ENCODE measurements at regions of chr10 and their contacts with region 1.

Region 1: DNA sequence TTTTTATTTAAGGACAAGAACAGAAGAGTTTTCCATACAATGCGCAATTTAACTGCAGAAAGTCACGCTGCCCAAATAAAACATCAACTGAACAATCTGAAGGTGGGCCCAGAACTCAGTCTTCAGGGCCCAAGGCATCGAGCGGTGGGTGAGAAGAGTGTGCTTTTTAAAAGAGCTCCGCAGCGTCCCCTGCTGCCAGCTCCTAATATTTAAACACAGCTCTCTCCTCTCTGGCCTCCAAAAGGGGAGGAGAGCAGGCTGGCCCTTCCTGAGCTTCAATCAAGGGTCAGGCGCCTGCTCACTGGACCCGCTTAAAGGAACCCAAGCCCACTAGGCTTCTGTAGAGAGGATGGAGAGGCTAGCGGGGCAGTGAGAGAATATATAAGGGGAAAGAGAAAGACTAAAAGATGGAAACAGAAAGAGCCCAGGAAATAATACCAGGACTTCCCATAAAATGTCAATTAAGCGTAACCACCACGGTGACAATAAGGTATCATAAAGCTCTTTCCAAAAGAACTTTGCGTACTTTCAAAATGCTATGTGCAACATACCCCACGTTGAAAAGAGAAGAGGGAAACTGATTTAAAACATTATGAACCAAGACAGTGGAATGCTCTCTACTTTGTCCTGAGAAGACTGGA is 2.8 kb downstream of the FAM53B start:
- DNase-seq: peak; percentile 69 to 82 (median 71)
- H3K4me3 ChIP-seq: peak overlapping the region; percentile 74
- H3K4me3 Mint-ChIP-seq: peak overlapping the region; percentile 95 to 100 (median 98)
- H3K27ac ChIP-seq: peak overlapping the region; percentile 53
- H3K27ac Mint-ChIP-seq: peak overlapping the region; percentile 89 to 98 (median 96)
- H3K4me1 ChIP-seq: peaks cover 72% of the 10 kb centered on the region
- H3K4me1 Mint-ChIP-seq: peaks cover 70 to 77% (median 77%) of the 10 kb centered on the region in 3 donors
- H3K27me3 ChIP-seq: no peaks in the 10 kb centered on the region
- H3K27me3 Mint-ChIP-seq: peaks cover 0 to 1% of the 10 kb centered on the region in 2 donors

Region 2: GRCh38 chr10:124539935-124540641 is 201.3 kb before region 1 on chr10:
- CTCF ChIA-PET with region 1: interaction called, 154 read pairs
- POLR2A ChIA-PET with region 1: interaction called, 6 read pairs
- DNase-seq: peak; percentile 59 to 81 (median 63)
- H3K4me3 ChIP-seq: no peak overlapping the region
- H3K4me3 Mint-ChIP-seq: no peak overlapping the region
- H3K27ac ChIP-seq: no peak overlapping the region
- H3K27ac Mint-ChIP-seq: peak overlapping the region in 2 of 8 donors; percentile 3 to 57
- H3K4me1 ChIP-seq: peaks cover 11% of the 10 kb centered on the region
- H3K4me1 Mint-ChIP-seq: peaks cover under 1 to 13% (median 6%) of the 10 kb centered on the region in 3 donors
- H3K27me3 ChIP-seq: no peaks in the 10 kb centered on the region
- H3K27me3 Mint-ChIP-seq: no peaks in the 10 kb centered on the region

Region 3: DNA sequence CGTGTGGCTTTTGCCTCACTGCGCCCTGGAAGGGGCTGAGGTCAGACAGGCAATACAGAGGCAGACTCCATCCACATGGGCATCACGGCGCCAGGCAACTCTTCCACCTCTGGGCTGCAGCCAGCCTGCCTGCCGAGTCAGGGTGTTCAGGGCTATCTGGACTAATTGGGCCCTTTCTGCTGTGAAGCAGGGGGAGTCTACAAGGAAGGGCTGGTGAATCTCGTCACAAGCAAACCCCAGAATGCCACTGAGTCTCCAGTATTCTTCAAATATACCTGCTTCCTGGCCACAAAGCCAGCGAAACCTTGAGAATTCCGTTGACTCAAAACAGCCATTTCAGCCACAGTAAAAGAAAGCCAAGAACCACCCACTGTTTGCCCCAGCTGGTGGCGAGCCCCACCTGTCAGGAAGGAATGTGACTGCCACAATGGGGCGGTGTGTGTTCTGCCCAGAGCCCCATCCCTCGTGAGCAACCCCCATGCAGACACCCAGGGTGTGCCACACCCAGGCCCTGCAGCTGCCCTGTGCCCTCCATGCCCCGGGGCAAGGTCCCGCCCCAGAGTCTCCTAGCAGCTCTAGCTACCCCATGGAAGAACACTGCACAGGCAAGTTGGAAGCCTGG is 114.5 kb before region 1 on chr10:
- CTCF ChIA-PET with region 1: interaction called, 27 read pairs
- POLR2A ChIA-PET with region 1: interaction called, 4 read pairs
- DNase-seq: peak in 4 of 5 donors; percentile 14 to 68 (median 39)
- H3K4me3 ChIP-seq: peak overlapping the region; percentile 37
- H3K4me3 Mint-ChIP-seq: peak overlapping the region in 6 of 7 donors; percentile 43 to 73 (median 67)
- H3K27ac ChIP-seq: no peak overlapping the region
- H3K27ac Mint-ChIP-seq: peak overlapping the region; percentile 78 to 95 (median 90)
- H3K4me1 ChIP-seq: peaks cover 53% of the 10 kb centered on the region
- H3K4me1 Mint-ChIP-seq: peaks cover 55 to 80% (median 61%) of the 10 kb centered on the region in 3 donors
- H3K27me3 ChIP-seq: no peaks in the 10 kb centered on the region
- H3K27me3 Mint-ChIP-seq: no peaks in the 10 kb centered on the region

Region 4: GRCh38 chr10:124647421-124648130 is 93.8 kb before region 1 on chr10:
- CTCF ChIA-PET with region 1: interaction called, 107 read pairs
- POLR2A ChIA-PET with region 1: interaction called, 10 read pairs
- DNase-seq: peak; percentile 64 to 86 (median 66)
- H3K4me3 ChIP-seq: peak overlapping the region; percentile 41
- H3K4me3 Mint-ChIP-seq: peak overlapping the region; percentile 75 to 95 (median 84)
- H3K27ac ChIP-seq: peak overlapping the region; percentile 75
- H3K27ac Mint-ChIP-seq: peak overlapping the region; percentile 96 to 100 (median 98)
- H3K4me1 ChIP-seq: peaks cover 90% of the 10 kb centered on the region
- H3K4me1 Mint-ChIP-seq: peaks cover 92 to 100% (median 94%) of the 10 kb centered on the region in 3 donors
- H3K27me3 ChIP-seq: no peaks in the 10 kb centered on the region
- H3K27me3 Mint-ChIP-seq: no peaks in the 10 kb centered on the region

Region 5: DNA sequence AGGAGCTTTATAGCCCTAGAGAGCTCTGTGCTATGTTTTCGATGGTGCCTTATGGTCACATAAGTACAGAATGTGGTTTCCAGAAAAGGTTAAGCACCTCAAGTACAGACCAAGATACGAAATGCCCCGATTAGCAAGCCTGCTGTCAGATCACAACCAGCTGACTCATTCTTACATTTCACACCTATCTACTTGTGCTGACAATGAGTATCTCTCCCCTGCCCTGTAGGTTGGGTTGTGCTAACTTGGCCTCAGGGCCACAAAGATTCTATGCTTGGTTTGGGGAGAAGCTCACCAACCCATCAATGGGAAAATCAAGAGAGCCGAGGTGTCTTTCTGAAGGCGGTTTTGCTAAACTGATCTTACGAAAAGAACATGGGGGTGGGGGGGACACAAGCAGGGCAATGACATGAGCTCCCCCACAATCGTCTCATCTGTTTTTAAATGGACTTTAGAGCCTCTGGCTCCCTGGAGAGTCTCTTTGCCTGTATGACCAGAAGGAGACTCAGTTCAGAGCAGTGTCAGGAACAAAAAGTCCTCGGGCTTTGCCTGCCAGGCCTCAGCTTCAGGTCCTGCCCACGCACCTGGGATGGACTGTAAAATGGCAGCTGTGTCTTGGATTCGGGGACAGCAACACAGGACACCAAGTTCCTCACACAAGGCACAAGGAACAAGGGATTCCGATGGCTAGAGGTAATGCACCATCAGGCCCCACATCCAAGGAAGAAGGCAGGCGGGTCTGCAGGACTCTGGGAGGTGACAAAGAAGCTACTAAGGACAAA is 52.3 kb before region 1 on chr10:
- CTCF ChIA-PET with region 1: interaction called, 58 read pairs
- POLR2A ChIA-PET with region 1: interaction called, 16 read pairs
- DNase-seq: peak in 4 of 5 donors; percentile 43 to 82 (median 62)
- H3K4me3 ChIP-seq: no peak overlapping the region
- H3K4me3 Mint-ChIP-seq: peak overlapping the region; percentile 1 to 87 (median 75)
- H3K27ac ChIP-seq: peak overlapping the region; percentile 48
- H3K27ac Mint-ChIP-seq: peak overlapping the region; percentile 82 to 99 (median 96)
- H3K4me1 ChIP-seq: peaks cover 79% of the 10 kb centered on the region
- H3K4me1 Mint-ChIP-seq: peaks cover 73 to 93% (median 93%) of the 10 kb centered on the region in 3 donors
- H3K27me3 ChIP-seq: no peaks in the 10 kb centered on the region
- H3K27me3 Mint-ChIP-seq: no peaks in the 10 kb centered on the region

Region 6: GRCh38 chr10:124719213-124719851 is 22.1 kb before region 1 on chr10:
- CTCF ChIA-PET with region 1: interaction called, 397 read pairs
- POLR2A ChIA-PET with region 1: interaction called, 33 read pairs
- DNase-seq: peak; percentile 54 to 85 (median 77)
- H3K4me3 ChIP-seq: peak overlapping the region; percentile 42
- H3K4me3 Mint-ChIP-seq: peak overlapping the region; percentile 35 to 85 (median 82)
- H3K27ac ChIP-seq: peak overlapping the region; percentile 77
- H3K27ac Mint-ChIP-seq: peak overlapping the region; percentile 88 to 99 (median 98)
- H3K4me1 ChIP-seq: peaks cover 99% of the 10 kb centered on the region
- H3K4me1 Mint-ChIP-seq: peaks cover 92 to 99% (median 97%) of the 10 kb centered on the region in 3 donors
- H3K27me3 ChIP-seq: no peaks in the 10 kb centered on the region
- H3K27me3 Mint-ChIP-seq: peaks cover 0 to 2% of the 10 kb centered on the region in 2 donors

Region 7: GRCh38 chr10:124765256-124765655 is 23.9 kb after region 1 on chr10:
- CTCF ChIA-PET with region 1: no interaction called
- POLR2A ChIA-PET with region 1: no interaction called
- DNase-seq: no peak
- H3K4me3 ChIP-seq: no peak overlapping the region
- H3K4me3 Mint-ChIP-seq: no peak overlapping the region
- H3K27ac ChIP-seq: no peak overlapping the region
- H3K27ac Mint-ChIP-seq: no peak overlapping the region
- H3K4me1 ChIP-seq: no peaks in the 10 kb centered on the region
- H3K4me1 Mint-ChIP-seq: peaks cover 0 to 2% (median 0%) of the 10 kb centered on the region in 3 donors
- H3K27me3 ChIP-seq: no peaks in the 10 kb centered on the region
- H3K27me3 Mint-ChIP-seq: no peaks in the 10 kb centered on the region

Measured in CD8-positive, alpha-beta memory T cell (primary cell).